A673 (cell line): ENCODE measurements at regions of chr18 and their contacts with region 1.

Region 1: DNA sequence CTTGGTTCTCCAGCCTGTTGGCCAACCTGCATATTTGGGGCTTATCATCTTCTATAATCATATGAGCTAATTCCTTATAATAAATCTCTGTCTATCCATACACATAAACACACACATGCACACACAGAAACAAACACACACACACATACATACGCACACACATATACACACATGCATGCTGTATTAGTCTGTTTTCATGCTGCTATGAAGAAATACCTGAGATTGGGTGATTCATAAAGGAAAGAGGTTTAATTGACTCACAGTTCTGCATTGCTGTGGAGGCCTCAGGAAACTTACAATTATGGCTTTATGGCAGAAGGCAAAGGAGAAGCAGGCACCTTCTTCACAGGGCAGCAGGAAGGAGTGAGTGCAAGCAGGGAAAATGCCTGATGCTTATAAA is 707.4 kb upstream of the CDH2 start:
- DNase-seq: no peak
- H3K4me3 ChIP-seq: no peak overlapping the region
- H3K27ac ChIP-seq: no peak overlapping the region
- H3K4me1 ChIP-seq: no peaks in the 10 kb centered on the region
- H3K27me3 ChIP-seq: no peaks in the 10 kb centered on the region
- CTCF ChIP-seq: no peak

Region 2: GRCh38 chr18:28946471-28946870 is 62.2 kb after region 1 on chr18:
- CTCF ChIA-PET with region 1: no interaction called
- POLR2A ChIA-PET with region 1: no interaction called
- intact Hi-C with region 1: loop called (anchors 10 kb)
- DNase-seq: no peak
- H3K4me3 ChIP-seq: no peak overlapping the region
- H3K27ac ChIP-seq: no peak overlapping the region
- H3K4me1 ChIP-seq: no peaks in the 10 kb centered on the region
- H3K27me3 ChIP-seq: no peaks in the 10 kb centered on the region
- CTCF ChIP-seq: no peak